Gastrocnemius medialis (tissue), 4 donors: ENCODE measurements at regions of chr11 and their contacts with region 1.

Region 1: DNA sequence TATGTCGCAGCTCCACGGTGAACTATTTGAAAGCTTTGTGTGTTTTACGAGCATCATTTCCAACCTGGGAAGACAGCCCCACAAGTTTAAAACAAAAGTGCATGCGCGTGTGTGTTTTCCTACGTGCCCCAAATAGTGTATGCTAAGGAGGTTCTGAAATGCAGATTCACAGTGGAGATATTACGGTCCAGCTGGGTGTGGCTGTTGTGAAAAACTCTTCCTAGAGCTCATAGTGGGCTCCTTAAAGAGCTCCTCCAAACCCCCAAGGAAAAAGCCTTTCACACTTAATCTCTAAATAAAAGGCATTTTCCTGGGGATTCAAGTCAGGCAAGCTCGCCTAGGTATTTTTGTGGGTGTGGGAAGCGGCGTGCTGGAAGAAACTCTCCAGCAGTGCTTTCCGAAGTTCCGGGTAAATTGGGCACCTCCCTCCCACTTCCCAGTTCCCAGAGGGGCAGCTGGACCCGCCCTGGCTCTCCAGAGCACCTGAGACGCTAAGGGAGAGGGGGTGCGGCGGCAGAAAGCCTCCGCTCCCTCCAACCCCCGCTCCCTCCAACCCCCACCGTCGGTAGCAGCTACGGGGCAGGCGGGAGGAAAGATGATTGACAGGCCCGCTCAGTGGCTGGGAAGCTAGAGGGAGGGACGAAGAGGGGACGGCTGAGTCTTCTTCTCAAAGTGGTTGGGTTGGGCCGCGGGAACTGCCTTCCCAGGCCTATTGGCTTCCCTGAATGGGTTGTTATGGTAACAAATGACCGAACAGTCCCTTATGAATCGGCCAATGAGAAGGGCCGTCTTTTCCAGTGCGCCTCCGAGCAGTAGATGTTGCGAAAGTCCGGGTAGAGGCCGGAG is 558 bp upstream of the PCF11 start:
- DNase-seq: peak; percentile 100
- ATAC-seq: peak; percentile 92
- H3K4me3 ChIP-seq: peak overlapping the region; percentile 61 to 100 (median 82)
- H3K27ac ChIP-seq: peak overlapping the region; percentile 87 to 100 (median 97)
- H3K4me1 ChIP-seq: peaks cover 21% of the 10 kb centered on the region in 2 donors
- H3K27me3 ChIP-seq: no peaks in the 10 kb centered on the region
- CTCF ChIP-seq: no peak
- POLR2A ChIP-seq: peak in 1 of 2 donors; percentile 58

Region 2: DNA sequence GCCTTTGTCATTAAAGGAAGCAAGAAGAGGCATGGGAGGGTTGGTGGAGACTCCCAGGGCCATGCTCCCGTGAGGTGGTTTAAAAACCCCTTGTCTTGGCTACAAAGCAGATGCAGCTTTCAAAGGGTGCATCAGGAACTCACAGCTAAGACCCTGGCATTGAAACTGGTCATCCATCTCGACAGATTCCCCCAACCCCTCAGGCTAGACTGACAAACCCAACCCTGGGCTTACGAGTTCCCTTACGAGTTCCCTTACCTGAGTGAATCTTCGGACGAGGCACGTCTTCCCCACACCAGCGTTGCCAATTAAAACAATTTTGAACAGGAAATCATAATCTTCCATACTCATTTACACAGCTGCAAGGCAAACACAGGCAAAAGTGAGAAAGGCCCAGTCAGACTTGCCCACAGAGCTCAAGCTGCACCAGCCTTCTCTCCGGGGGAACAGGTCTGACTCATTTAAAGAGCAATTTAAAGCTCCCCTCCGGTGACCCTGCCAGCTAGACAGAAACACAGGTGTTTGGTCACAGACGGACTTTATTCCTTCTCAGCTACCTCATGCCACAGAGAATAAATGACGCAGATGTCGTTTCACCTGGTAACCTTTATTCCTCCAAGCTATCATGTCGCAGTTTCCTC is 159.3 kb before region 1 on chr11:
- in situ Hi-C with region 1: no loop called
- intact Hi-C with region 1: loop called (anchors 2 kb)
- DNase-seq: peak in 1 of 2 donors; percentile 52
- ATAC-seq: peak; percentile 37 to 57
- H3K4me3 ChIP-seq: peak overlapping the region in 2 of 4 donors; percentile 11 to 24
- H3K27ac ChIP-seq: peak overlapping the region; percentile 55 to 75 (median 69)
- H3K4me1 ChIP-seq: peaks cover 92 to 97% of the 10 kb centered on the region in 2 donors
- H3K27me3 ChIP-seq: no peaks in the 10 kb centered on the region
- CTCF ChIP-seq: no peak
- POLR2A ChIP-seq: peak in 1 of 2 donors; percentile 20

Region 3: DNA sequence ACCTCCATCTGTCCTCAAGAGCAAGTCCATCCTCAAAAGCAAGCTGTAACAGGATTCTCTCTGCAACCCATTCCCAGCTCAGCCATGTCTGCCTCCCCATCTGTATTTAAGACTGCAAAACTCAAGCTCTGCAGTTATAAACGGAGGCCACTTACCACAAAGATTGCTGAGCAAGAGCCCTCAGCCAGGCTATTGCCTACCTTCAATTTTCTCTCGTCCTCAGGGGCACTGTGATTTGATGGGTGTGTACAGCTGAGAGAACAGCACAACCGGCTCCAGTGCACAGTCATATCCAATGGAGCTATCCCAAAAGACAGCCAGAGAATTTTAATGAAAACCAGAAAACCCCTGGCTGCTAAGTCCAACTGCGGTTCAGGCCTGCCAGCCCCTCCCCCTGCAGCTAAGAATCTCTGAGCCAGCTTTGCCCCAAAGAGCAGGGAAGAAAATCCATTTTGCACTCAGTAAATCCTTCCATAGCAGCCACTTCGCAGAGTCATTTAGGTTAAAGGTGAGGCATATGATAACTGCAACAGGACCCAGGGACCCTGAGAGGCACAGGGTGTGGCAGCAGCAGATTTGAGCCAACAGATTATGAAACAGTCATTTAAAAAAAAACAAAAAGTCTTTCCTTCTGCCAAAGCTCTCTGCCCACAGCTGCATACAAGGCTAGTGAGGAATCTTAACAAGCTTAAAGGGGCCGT is 122.3 kb before region 1 on chr11:
- in situ Hi-C with region 1: no loop called
- intact Hi-C with region 1: loop called (anchors 2 kb)
- DNase-seq: peak; percentile 71 to 86
- ATAC-seq: peak; percentile 72 to 77
- H3K4me3 ChIP-seq: peak overlapping the region; percentile 23 to 54 (median 48)
- H3K27ac ChIP-seq: peak overlapping the region; percentile 89 to 94 (median 92)
- H3K4me1 ChIP-seq: peaks cover 75 to 81% of the 10 kb centered on the region in 2 donors
- H3K27me3 ChIP-seq: no peaks in the 10 kb centered on the region
- CTCF ChIP-seq: no peak
- POLR2A ChIP-seq: peak; percentile 41 to 45

Region 4: DNA sequence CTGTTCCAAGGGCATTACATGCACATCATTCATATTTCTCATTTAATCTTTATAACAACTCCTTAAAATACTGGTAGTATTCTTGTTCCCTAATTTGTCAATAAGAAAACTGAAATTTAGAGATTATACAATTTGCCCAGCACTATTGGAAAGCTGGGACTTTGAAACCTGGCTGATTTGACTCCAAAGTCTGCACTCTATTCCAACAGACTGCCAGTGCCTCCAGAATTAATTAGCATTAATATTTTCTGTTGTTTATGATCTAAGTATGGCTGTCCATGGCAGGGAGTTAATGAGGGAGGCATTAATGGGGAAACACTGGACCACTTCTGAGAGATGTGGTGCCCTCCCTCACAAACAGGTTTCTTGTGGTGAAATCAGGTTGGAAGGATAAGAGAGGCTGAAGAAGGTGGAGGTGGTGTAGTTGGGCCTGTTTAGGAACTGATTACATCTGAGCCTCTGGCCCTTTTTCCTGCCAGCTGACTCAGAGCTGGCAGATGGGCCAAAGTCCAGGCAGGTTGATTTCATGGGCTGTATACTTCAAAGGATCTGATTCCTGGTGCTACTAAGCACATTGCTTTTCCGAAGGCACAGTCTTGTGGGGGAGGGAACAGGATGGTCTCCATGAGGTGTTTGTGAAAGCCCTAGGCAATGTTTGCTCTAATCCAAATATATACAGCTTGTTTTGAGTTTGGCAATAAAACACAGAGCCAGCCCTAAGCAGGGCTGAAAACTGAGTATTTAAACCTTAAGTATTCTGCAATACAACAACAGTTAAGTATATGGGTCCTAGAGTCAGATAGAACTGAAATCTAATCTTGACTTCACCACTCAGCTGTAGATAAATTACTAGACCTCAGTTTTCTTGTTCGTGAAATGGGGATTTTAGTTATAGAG is 63.6 kb before region 1 on chr11:
- in situ Hi-C with region 1: no loop called
- intact Hi-C with region 1: loop called (anchors 2 kb)
- DNase-seq: peak; percentile 59 to 69
- ATAC-seq: peak; percentile 96 to 97
- H3K4me3 ChIP-seq: no peak overlapping the region
- H3K27ac ChIP-seq: peak overlapping the region; percentile 36 to 79 (median 64)
- H3K4me1 ChIP-seq: peaks cover 16 to 19% of the 10 kb centered on the region in 2 donors
- H3K27me3 ChIP-seq: no peaks in the 10 kb centered on the region
- CTCF ChIP-seq: no peak
- POLR2A ChIP-seq: no peak

Region 5: DNA sequence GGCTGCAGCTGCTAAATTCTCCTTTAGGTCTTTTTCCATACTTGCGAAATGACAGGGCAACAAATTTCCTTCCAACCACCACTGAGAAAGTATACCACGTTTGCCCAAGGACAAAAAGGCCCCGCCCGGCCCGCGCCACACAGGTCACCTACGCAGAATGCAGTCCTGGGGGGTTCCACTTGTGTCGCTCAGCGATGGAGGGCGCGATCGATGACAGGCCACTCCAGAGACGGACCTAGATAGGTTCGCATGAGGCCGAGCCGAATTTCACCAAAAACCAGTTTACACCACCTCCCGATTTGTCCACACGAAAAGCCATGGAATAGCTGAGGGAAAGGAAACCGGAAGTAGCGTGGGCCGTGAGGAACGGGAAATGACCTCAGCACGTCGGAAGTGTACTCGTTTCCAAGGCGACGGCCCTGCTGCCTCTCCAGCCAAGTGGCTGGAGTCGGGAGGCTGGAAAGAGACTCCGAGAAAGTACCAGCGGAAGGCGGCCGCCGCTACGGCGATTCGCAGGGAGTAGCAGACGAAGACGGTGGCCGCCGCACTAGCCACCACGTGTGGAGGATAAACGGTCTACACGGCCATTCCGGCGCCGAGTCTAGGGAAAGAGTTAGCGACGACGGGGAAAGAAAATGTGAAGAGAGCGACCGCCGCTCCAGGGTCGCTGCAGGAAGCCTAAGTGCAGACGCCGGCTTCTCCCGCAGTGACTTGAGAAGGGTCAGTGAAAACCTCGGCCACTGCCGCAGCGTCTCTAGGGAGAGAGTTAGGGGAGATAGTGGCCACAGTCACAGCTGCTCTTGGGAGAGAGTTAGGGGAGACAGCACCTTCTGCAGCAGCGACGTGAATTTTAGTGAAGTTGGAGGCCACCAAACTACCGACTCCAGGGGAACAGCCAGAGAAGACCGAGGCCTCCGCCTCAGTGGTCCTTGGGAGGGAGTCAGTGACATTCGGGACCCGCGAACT is 37.2 kb after region 1 on chr11 and contains the start of gene ANKRD42:
- in situ Hi-C with region 1: loop called in 1 of 4 experiments (anchors 5 kb)
- intact Hi-C with region 1: loop called (anchors 1 kb)
- DNase-seq: peak; percentile 91
- ATAC-seq: peak; percentile 98 to 99
- H3K4me3 ChIP-seq: peak within 1 kb of the TSS; percentile 72 to 87 (median 84)
- H3K27ac ChIP-seq: peak within 1 kb of the TSS; percentile 84 to 95 (median 90)
- H3K4me1 ChIP-seq: peaks cover 18 to 23% of the 10 kb centered on the region in 2 donors
- H3K27me3 ChIP-seq: no peaks in the 10 kb centered on the region
- CTCF ChIP-seq: peak in 1 of 5 experiments; percentile 17
- POLR2A ChIP-seq: peak; percentile 50 to 78
- total RNA-seq, gene ANKRD42: 2.1 to 3.7 (median 3.4) TPM

Region 6: GRCh38 chr11:83285771-83286528 is 129.6 kb after region 1 on chr11 and contains the start of gene CCDC90B:
- in situ Hi-C with region 1: no loop called
- intact Hi-C with region 1: loop called (anchors 10 kb)
- DNase-seq: peak; percentile 96 to 97
- ATAC-seq: peak; percentile 97 to 98
- H3K4me3 ChIP-seq: peak within 1 kb of the TSS; percentile 80 to 94 (median 90)
- H3K27ac ChIP-seq: peak within 1 kb of the TSS; percentile 95 to 98 (median 97)
- H3K4me1 ChIP-seq: peaks cover 36 to 37% of the 10 kb centered on the region in 2 donors
- H3K27me3 ChIP-seq: no peaks in the 10 kb centered on the region
- CTCF ChIP-seq: peak in 1 of 5 experiments; percentile 7
- POLR2A ChIP-seq: peak; percentile 83 to 88
- total RNA-seq, gene CCDC90B: 18.1 to 30.1 (median 22.8) TPM